Vagina (tissue), 2 donors: ENCODE measurements at regions of chr11 and their contacts with region 1.

Region 1: GRCh38 chr11:128172046-128172878 is 415.1 kb downstream of the ETS1 start:
- DNase-seq: no peak
- H3K4me3 ChIP-seq: no peak overlapping the region
- H3K27ac ChIP-seq: no peak overlapping the region
- H3K4me1 ChIP-seq: no peaks in the 10 kb centered on the region
- H3K27me3 ChIP-seq: no peaks in the 10 kb centered on the region
- CTCF ChIP-seq: peak; percentile 75 to 84 (median 82)
- POLR2A ChIP-seq: no peak

Region 2: DNA sequence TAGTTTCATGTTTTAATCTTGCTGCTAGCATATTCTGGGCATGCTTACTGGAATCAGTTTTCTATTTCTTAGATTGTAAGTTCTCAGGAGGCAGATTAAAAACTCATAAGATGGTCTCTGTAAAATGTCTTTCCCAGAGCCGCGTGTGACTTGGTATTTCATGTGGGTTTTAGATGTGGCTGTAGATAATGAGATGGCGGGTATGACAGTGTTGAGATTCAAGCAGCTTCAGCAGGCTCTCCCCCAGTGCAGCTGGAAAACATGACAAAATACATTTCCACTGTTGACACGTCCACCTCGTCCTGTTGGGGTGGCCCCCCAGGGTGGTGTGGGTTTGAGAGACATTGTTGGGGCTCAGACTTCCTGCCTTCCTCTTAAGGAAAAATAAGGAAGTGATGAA is 1278.5 kb before region 1 on chr11:
- intact Hi-C with region 1: no loop called
- DNase-seq: no peak
- H3K4me3 ChIP-seq: no peak overlapping the region
- H3K27ac ChIP-seq: no peak overlapping the region
- H3K4me1 ChIP-seq: no peaks in the 10 kb centered on the region
- H3K27me3 ChIP-seq: no peaks in the 10 kb centered on the region
- CTCF ChIP-seq: no peak
- POLR2A ChIP-seq: no peak

Region 3: GRCh38 chr11:128279866-128280265 is 107.6 kb after region 1 on chr11:
- intact Hi-C with region 1: loop called (anchors 10 kb)
- DNase-seq: no peak
- H3K4me3 ChIP-seq: no peak overlapping the region
- H3K27ac ChIP-seq: peak overlapping the region; percentile 52
- H3K4me1 ChIP-seq: no peaks in the 10 kb centered on the region
- H3K27me3 ChIP-seq: no peaks in the 10 kb centered on the region
- CTCF ChIP-seq: no peak
- POLR2A ChIP-seq: no peak

Region 4: GRCh38 chr11:128624269-128625175 is 452.3 kb after region 1 on chr11:
- intact Hi-C with region 1: loop called (anchors 10 kb)
- DNase-seq: no peak
- H3K4me3 ChIP-seq: no peak overlapping the region
- H3K27ac ChIP-seq: no peak overlapping the region
- H3K4me1 ChIP-seq: peaks cover 17% of the 10 kb centered on the region
- H3K27me3 ChIP-seq: no peaks in the 10 kb centered on the region
- CTCF ChIP-seq: no peak
- POLR2A ChIP-seq: no peak

Region 5: DNA sequence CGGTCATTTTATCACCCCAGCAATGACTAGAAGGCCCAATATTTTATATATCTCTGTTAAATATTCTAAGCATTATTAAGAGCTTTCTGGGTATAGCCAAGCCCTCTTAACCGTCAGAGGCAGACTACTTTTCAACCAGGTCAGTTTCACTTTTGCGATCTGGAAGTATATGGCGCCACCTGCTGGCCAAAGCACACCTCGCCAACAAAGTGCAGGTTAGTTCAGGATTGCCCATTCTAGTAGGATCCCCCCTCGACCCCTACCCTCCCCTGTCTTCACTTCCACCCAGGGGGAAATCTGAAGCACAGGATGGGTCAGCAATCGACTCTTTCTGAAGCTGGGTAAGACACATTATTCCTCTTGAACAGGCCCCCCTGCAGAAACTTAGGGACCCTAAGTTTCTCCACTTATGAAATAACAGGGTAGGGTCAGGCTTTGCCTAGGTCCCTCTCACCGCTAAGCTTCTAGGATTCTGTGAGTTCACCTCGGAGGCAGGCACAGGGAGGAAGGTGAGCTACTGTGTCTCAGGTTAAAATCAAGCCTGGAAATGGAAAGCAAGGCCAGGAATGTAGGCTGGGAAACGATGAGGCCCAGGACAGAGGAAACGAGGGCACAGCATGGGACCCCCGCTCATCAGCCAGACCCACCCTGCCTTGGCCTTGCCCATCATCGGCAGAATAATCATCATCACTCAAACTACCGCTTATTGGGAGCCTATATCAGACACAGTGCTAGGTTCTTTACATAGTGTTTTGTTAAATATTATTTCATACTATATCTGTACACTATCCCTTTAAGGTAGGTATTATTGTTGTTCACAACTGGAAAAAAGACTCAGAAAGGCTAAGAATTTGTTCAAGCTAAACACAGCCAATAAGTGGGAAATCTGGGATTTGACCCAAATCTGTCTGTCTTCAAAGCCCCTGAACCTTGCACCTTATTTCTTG is 659.2 kb after region 1 on chr11:
- intact Hi-C with region 1: loop called (anchors 5 kb)
- DNase-seq: no peak
- H3K4me3 ChIP-seq: no peak overlapping the region
- H3K27ac ChIP-seq: no peak overlapping the region
- H3K4me1 ChIP-seq: no peaks in the 10 kb centered on the region
- H3K27me3 ChIP-seq: no peaks in the 10 kb centered on the region
- CTCF ChIP-seq: peak; percentile 77 to 91 (median 80)
- POLR2A ChIP-seq: no peak